ENCODE measurements at regions of chr2 and their contacts with region 1.

Region 1: DNA sequence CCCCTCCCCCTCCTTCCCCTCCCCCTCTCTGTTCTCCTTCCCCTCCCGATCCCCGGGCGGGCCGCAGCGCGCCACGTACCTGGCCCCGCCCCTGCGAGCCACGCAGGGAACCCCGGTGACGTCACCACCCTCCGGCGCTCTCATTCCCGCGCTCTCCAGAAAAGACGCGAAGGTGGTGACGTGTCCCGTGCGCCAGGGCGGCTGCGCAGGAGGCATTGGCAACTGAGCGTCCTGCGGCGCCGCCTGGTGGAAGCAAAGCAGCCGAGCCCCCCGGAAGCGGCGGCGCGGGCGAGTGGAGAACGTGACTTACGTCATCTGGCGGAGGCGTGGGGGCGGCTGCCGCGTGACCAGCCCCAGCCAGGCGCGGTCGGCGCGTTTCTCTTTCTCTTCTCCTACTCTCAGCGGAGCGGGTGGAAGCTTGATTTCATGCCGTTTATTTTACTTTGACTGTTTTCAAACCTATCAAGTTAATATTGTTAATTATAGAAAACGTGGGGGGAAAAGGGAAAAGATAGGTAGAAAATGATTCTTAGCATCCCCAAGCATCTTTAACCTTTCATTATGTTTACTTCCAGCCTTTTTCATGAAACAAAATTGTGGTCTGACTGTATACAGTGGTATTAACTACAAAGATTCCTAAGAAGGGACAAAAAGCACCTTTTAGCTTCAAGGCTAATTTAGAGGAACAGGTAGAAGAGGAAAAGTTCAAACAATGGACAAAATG is 48.1 kb downstream of the C2orf42 start:
- DNase-seq: peak; percentile 93 to 99
- H3K4me3 ChIP-seq: peak overlapping the region; percentile 66
- H3K27ac ChIP-seq: peak overlapping the region; percentile 99
- H3K4me1 ChIP-seq: peaks cover 32% of the 10 kb centered on the region
- H3K27me3 ChIP-seq: no peaks in the 10 kb centered on the region
- CTCF ChIP-seq: peak; percentile 86

Region 2: GRCh38 chr2:69997015-69997830 is 145.5 kb before region 1 on chr2:
- CTCF ChIA-PET with region 1: no interaction called
- POLR2A ChIA-PET with region 1: no interaction called
- intact Hi-C with region 1: loop called (anchors 2 kb)
- DNase-seq: peak; percentile 82 to 93
- H3K4me3 ChIP-seq: no peak overlapping the region; the same call in 1 of the 2 replicates
- H3K27ac ChIP-seq: peak overlapping the region; percentile 87
- H3K4me1 ChIP-seq: peaks cover 53% of the 10 kb centered on the region
- H3K27me3 ChIP-seq: no peaks in the 10 kb centered on the region
- CTCF ChIP-seq: no peak

Region 3: DNA sequence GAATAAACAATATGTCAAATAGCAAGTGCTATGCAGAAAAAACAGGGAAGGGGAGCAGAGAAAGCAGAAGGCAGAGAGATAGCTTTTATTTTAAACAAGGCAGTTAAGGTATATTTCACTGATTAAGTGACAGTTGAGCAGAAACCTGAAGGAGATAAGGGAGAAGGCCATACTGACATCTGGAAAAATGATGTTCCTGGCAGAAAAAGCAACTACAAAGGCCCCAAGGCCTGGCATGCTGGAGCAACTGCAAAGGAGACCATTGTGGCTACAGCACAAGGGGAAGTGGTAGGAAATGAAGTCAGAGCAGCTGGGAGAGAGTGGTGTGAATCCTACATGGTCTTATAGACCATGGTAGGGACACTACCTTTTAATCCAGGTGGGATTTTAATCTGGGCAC is 64.4 kb before region 1 on chr2:
- CTCF ChIA-PET with region 1: no interaction called
- POLR2A ChIA-PET with region 1: interaction called, 15 read pairs
- intact Hi-C with region 1: no loop called
- DNase-seq: no peak
- H3K4me3 ChIP-seq: no peak overlapping the region
- H3K27ac ChIP-seq: no peak overlapping the region
- H3K4me1 ChIP-seq: peaks cover 6% of the 10 kb centered on the region
- H3K27me3 ChIP-seq: no peaks in the 10 kb centered on the region
- CTCF ChIP-seq: no peak

Region 4: DNA sequence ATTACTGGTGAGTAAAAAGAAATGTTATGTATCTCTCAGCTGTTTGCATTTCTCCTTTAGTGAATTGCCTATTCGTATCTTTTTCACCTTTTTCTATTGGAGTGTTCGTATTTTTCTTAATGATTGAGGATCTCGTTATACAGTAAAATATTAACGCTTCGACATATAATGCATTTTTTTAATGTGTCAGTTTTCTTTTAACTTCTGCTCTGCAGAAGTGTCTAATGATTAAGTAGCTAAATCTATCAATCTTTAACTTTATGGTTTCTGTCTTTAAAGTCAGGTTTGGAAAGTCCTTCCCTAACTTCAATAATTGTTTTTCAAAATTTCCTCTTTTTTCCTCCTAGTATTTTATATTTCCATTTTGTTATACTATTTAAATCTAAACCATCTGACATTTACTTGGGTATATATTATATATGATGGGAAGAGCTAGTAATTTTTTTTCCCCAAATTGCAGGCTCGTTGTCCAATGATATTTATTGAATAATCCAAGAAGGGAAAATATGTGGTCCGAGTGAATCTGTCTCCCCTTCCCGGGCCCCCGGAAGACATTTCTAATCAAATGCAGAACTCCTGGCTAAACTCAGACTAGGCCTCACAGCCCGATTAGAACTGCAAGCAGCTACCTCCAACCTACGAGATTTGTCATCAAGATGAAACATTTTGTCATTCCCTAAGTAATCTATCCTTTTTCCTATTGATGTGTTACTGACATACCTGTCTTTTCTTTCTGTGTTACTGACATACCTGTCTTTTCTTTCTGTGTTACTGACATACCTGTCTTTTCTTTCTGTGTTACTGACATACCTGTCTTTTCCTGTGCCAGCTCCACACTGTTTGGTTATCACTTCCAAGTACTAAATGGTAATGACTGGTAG is 38.3 kb before region 1 on chr2:
- CTCF ChIA-PET with region 1: no interaction called
- POLR2A ChIA-PET with region 1: no interaction called
- intact Hi-C with region 1: loop called (anchors 2 kb)
- DNase-seq: no peak
- H3K4me3 ChIP-seq: no peak overlapping the region
- H3K27ac ChIP-seq: no peak overlapping the region
- H3K4me1 ChIP-seq: peaks cover 15% of the 10 kb centered on the region
- H3K27me3 ChIP-seq: no peaks in the 10 kb centered on the region
- CTCF ChIP-seq: no peak

Region 5: DNA sequence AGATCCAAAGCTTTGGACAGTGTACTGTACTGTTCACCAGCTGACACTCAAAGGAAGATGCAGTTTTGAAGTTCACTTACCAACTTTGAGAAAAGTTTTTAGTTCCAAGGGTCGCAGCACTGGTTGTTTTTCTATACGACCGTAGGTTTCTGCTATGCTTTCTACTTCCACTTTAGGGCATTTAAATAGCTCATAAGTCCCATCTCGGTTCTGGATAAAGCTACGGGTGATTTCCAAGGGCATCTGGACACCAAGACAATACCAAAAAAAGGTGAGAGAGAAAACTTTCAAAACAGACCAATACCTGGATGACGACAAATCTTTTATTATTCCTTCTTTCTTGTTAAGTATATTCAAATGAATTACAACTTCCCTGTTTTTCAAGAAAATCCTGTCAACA is 17.8 kb after region 1 on chr2:
- CTCF ChIA-PET with region 1: no interaction called
- POLR2A ChIA-PET with region 1: no interaction called
- intact Hi-C with region 1: no loop called
- DNase-seq: no peak
- H3K4me3 ChIP-seq: no peak overlapping the region
- H3K27ac ChIP-seq: no peak overlapping the region
- H3K4me1 ChIP-seq: no peaks in the 10 kb centered on the region
- H3K27me3 ChIP-seq: no peaks in the 10 kb centered on the region
- CTCF ChIP-seq: no peak

Region 6: DNA sequence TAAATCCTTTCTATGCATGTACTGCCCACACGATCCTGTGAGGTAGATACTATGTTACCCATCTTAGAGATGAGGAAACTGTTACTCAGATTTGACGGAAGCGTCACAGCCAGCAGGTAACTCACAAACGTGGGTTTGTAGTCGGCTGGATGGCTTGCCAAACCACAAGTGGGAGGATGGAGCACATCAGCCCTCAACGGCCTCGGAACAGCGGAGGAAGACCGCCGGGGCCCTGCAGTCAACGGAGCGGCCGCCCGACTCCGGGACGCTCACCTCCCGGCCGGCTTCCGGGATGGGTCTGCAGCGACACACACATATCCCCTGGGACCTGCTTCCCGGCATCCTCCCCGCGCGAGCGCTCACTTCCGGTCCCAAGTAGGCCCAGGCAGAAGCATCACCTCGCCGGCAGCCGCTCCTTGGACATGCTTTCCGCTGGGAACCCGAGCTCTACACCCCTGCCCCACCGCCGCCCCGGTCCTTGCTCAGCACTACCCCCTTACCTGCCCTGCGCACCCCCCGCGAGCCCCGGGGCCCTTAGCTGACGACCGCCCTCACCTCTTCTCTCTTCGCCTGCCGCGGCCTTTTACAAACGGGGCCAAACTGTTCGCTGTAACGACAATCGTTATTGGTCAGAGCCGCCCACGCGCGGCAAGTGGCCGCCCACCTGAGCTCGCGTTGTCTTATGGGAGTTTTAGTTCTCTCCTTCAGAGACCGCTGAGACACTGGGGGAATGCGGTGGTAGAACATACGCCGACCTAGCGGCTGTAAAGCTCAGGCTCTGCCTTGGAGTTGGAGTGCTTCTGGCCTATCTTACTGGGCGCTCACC is 47.9 kb after region 1 on chr2 and contains the start of gene C2orf42:
- CTCF ChIA-PET with region 1: no interaction called
- POLR2A ChIA-PET with region 1: interaction called, 11 read pairs
- intact Hi-C with region 1: no loop called
- DNase-seq: peak; percentile 91 to 95
- H3K4me3 ChIP-seq: peak within 1 kb of the TSS; percentile 85
- H3K27ac ChIP-seq: peak within 1 kb of the TSS; percentile 78
- H3K4me1 ChIP-seq: peaks cover 16% of the 10 kb centered on the region
- H3K27me3 ChIP-seq: no peaks in the 10 kb centered on the region
- CTCF ChIP-seq: no peak
- total RNA-seq, gene C2orf42: 12.7 and 14.3 TPM in 2 replicates